Common myeloid progenitor, CD34-positive (primary cell): ENCODE measurements at regions of chr13 and their contacts with region 1.

Region 1: DNA sequence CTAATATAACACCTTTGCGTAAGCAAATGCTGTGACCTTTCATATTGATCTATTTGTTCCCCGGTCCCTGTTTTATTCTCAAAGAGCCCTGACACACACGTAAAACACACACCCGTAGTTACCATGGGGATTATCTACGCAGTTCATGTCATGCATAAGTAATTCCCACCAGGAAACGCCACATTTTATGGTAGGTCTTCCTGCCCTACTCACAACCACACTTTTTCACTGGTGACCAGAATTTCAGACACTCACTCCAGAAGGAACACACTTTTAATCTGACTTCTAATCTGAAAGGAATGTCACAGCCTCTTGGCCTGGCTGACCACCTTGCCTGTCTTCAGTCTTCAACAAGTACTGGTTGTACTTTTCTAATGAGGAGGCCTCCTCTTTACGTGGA is 46.8 kb downstream of the SLC7A1 start:
- DNase-seq: peak; percentile 12 to 32 (median 18)
- H3K4me3 ChIP-seq: no peak overlapping the region
- H3K27ac ChIP-seq: no peak overlapping the region
- H3K4me1 ChIP-seq: peaks cover 0 to 4% (median 0%) of the 10 kb centered on the region in 4 experiments
- H3K27me3 ChIP-seq: no peaks in the 10 kb centered on the region

Region 2: GRCh38 chr13:29537736-29538651 is 10.7 kb before region 1 on chr13:
- CTCF ChIA-PET with region 1: no interaction called
- POLR2A ChIA-PET with region 1: no interaction called
- DNase-seq: no peak
- H3K4me3 ChIP-seq: no peak overlapping the region
- H3K27ac ChIP-seq: no peak overlapping the region
- H3K4me1 ChIP-seq: no peaks in the 10 kb centered on the region
- H3K27me3 ChIP-seq: no peaks in the 10 kb centered on the region

Region 3: GRCh38 chr13:29564818-29565217 is 16.1 kb after region 1 on chr13:
- CTCF ChIA-PET with region 1: interaction called, 10 read pairs
- POLR2A ChIA-PET with region 1: interaction called, 3 read pairs
- DNase-seq: no peak
- H3K4me3 ChIP-seq: no peak overlapping the region
- H3K27ac ChIP-seq: no peak overlapping the region
- H3K4me1 ChIP-seq: peaks cover 0 to 6% (median 0%) of the 10 kb centered on the region in 4 experiments
- H3K27me3 ChIP-seq: no peaks in the 10 kb centered on the region